GM13977 (cell line): ENCODE measurements at regions of chr1 and their contacts with region 1.

Region 1: DNA sequence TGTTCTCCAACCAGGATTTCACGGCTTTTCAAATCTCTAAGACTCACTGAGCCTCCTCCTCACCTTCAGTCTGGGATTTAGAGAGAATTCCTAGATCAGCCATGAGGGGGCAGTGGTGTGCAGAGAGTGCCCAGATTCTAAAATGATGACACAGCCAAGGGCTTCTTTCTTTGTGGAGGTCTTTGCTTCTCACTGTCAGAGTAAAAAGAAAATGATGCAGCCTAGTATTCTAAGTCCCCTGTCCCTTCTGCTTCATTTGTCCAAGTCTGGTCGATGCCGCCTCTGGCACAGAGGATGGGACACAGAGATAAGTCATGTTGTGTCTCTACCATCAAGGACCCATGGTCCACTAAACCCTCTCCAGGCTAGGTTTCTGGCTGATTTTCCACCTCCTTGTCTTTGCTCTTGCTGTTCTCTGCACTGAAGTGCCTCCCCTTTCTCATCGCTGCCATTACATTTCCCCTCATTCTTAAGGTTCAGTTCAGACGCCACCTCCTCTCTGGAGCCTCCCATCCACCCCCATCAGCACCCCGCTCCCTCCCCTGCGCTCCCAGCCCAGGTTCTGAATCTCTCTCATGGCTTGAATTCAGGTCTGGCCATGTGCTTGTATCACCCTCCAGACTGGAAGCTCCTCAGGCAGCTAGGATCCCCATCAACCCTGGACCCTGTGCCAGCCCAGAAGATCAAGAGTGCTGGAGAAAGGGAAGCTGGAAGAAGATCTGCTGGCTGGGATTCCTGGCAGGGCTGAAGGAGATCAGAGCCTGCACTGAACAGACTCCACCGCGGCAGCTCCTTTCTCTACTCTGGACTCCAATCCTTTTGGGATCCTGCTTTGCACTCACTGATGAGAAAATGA is 12.0 kb upstream of the TINAGL1 start:
- DNase-seq: peak; percentile 83
- CTCF ChIP-seq: peak; percentile 88

Region 2: DNA sequence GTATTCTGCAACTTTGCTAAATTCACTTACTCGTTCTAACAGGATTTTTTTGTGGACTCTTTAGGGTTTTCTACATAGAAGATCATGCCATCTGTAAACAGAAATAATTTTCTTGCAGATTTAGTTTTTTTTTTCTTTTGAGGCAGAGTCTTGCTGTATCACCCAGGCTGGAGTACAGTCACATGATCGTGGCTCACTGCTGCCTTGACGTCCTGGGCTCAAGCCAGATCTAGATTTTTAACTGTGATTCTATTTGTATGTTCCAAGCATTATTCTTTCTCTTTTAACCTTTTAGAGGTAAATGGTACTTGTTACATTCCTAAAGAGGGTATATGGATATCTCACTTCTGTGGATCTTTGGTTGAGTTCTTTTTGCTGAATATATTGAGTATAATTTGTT is 210.1 kb before region 1 on chr1:
- in situ Hi-C with region 1: no loop called
- DNase-seq: no peak
- CTCF ChIP-seq: no peak

Region 3: GRCh38 chr1:31617917-31618660 is 53.7 kb after region 1 on chr1:
- in situ Hi-C with region 1: loop called (anchors 10 kb)
- DNase-seq: peak; percentile 83
- CTCF ChIP-seq: peak; percentile 86